ENCODE measurements at regions of chr13 and their contacts with region 1.

Region 1: DNA sequence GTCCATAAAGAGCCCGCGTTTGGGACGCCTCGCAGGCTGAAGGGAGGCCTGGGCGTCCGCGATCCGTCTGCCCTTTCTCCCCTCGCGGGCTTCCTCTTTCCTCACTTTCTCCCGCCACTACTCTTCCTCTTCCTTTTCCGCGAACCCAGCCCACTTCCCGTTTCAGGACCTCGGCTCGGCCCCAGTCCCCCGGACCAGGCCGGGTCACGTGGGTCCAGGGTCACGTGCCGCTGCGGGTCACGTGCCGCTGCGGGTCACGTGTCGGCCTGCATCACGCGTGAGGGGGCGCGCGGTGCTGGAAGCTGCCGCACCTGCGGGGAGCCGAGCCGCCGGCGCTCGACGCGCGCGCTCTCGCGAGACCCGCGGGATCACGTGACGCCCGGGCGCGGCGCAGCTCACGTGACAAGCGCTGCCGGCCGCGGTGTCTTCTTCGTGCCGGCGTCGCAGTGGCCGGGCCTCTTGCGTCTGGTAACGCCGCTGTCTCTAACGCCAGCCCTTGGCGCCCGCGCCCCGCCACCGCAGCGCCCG is at the start of gene LAMP1:
- DNase-seq: peak; percentile 90 to 99 (median 93)

Region 2: DNA sequence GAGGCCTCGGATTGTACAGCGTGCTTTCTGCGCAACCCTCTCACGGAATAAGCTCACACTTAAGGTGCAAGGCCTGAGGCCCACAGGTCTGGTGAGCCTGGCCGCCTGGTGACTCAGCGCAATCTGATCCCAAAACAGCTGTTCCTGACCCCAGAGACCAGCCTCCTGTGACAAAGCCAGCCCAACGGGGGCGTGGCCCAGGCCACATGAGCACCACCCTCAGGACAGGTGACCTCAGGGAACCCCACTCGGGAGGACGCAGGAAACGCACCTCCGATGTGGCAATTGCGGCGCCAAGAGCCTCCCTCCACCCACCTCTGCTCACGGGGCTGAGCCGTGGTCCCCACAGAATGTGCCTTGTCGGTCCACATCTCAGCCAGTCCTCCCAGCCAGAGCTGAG is 40.6 kb after region 1 on chr13:
- intact Hi-C with region 1: no loop called
- DNase-seq: peak in 2 of 10 donors; percentile 39 to 74

Region 3: GRCh38 chr13:113393563-113394338 is 96.8 kb after region 1 on chr13:
- intact Hi-C with region 1: loop called (anchors 5 kb)
- DNase-seq: peak; percentile 55 to 97 (median 77)

Region 4: DNA sequence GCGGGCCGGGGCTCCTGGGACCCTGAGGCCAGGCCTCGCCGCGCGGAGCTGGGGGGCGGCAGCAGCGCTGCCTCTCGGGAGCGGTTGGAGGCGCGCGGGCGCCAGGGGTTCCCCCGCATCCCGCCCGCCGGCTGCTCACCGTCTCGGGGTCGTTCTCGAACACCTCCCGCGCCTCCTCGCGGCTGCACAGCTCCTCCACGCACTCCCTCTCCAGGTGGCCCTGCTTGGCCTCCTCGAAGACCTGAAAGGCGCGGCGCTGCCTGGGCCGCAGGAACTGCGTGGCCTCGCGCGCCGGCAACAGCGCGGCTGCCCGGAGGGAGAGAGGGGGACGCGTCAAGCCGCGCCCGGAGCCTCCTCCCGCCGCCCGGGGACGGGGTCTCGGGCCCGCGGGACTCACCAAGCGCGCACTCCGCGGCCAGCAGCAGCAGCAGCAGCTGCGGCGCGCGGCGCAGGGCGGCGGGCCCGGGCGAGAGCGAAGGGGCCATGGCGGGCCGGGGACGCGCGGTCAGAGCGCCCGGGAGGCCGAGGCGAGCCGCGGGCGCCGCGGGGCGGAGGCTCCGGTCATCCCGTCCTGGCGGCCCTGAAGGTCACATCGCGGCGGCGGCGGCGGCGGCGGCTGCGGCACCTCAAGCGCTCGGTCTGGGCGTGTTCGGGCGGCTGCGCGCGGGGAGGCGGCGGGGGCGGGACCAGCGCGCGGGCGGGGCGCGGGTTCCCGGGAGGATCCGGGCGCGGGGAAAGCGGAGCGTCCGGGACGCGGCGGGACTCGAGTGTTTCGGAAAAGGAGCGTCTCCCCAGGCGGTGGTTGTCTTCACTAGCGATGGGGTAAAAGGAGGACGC is 566.7 kb after region 1 on chr13 and contains the start of gene GAS6:
- intact Hi-C with region 1: no loop called
- DNase-seq: peak in 9 of 10 donors; percentile 45 to 94 (median 66)

Measured in posterior cingulate gyrus (tissue), 11 donors.